Sigmoid colon (tissue), 7 donors: ENCODE measurements at regions of chr20 and their contacts with region 1.

Region 1: GRCh38 chr20:5001174-5002076 is at the start of gene SLC23A2:
- DNase-seq: peak; percentile 65
- H3K4me3 ChIP-seq: peak within 1 kb of the TSS; percentile 68 to 98 (median 88)
- H3K27ac ChIP-seq: peak within 1 kb of the TSS; percentile 18 to 67 (median 36)
- H3K4me1 ChIP-seq: peaks cover 0 to 21% (median 13%) of the 10 kb centered on the region in 4 donors
- H3K27me3 ChIP-seq: no peaks in the 10 kb centered on the region
- CTCF ChIP-seq: no peak
- EP300 ChIP-seq: no peak
- POLR2A ChIP-seq: no peak
- total RNA-seq, gene SLC23A2: 10.9 to 15.2 (median 12.9) TPM

Region 2: DNA sequence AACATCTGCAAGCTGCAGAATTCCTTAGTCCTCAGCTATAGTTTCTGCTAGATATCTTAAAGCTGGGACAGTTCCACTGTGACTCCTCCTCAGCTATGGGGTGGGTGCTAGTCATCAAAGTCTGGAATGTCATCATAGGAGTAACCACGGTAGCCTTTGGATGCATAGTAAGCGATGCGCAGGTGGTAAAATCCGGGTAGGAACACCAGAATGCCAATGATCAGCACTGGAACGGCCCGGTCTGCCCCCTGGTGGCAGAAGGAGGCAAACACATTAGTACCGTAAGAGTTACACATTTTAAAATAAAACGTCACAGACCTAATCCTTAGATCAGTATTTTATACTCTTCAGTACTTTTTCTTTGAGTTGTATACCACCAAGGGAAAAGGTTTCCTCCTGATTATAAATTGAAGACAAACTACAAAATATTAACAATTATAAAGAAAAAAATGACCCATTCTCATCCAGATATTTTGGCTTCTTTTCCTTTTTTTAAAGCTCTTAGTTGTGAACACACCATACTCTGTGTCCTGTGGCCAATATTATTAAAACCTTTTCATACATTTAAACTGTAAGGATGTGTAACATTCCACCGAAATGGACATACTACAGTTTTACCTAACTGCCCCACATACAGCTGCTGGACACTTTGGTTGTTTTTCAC is 99.4 kb after region 1 on chr20:
- intact Hi-C with region 1: loop called (anchors 5 kb)
- DNase-seq: peak; percentile 82
- H3K4me3 ChIP-seq: no peak overlapping the region
- H3K27ac ChIP-seq: no peak overlapping the region
- H3K4me1 ChIP-seq: no peaks in the 10 kb centered on the region
- H3K27me3 ChIP-seq: no peaks in the 10 kb centered on the region
- CTCF ChIP-seq: peak; percentile 48 to 89 (median 87)
- EP300 ChIP-seq: no peak
- POLR2A ChIP-seq: no peak